Activated naive CD4-positive, alpha-beta T cell treated with anti-CD3 and anti-CD28 coated beads for 36 hours (primary cell): ENCODE measurements at regions of chr22 and their contacts with region 1.

Region 1: DNA sequence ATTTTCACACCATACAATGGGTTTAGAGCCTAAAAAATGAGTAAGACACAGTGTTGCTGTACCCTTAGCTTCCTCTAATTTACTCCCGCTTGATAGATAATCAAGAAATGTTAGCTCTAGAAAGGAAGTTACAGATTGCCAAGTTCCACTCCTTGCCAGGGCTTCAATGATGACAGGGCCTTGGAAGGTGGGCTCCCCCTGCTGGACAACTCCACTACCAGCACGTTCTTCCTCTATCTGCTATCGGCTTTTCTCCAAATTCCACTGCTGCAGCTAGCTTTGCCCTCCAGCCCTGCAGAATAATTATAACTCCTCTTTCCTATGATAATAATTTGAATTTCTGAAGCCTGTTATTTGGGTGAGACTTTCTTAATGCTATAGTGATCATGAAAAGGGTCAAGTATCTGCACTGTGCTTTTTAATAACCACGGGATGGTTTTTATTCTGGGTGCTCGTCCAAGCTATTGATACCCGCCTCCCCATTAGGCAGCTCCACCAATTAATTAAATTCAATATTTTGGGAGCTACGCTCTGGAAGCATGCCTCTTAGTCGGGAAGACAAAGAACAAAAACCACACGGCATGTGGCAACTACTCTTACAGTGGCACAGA is 9.0 kb downstream of the SYN3 start:
- DNase-seq: peak; percentile 74
- H3K4me3 Mint-ChIP-seq: no peak overlapping the region
- H3K27ac Mint-ChIP-seq: no peak overlapping the region
- H3K4me1 Mint-ChIP-seq: no peaks in the 10 kb centered on the region
- H3K27me3 Mint-ChIP-seq: peaks cover 28% of the 10 kb centered on the region

Region 2: DNA sequence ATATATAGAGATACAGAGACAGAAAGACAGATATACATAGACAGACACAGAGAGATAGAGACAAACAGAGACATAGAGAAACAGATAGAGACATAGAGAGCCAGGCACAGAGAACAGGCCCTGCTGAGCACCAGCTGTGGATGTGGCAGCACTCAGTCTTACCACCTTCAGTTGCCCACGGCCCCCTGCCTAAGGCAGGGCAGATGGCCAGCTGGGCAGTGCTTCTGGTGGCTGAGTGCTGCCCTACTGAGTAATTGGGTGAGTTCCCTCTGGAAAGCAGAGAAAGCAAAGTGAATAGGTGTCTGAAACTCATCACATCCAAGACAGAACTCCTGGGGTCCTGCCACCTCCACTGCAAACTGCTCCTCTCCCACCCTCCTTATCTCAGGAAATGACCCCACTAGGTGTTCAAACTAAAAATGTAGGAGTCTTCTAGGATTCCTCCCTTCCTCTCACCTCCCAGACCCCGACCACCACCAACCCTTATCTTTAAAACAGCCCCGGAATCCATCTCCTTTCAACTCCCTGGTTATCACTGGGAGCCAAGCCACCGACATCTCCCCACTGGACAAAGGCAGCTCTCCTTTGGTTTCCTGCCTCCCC is 18.2 kb before region 1 on chr22:
- CTCF ChIA-PET with region 1: interaction called, 11 read pairs
- intact Hi-C with region 1: no loop called
- DNase-seq: no peak
- H3K4me3 Mint-ChIP-seq: no peak overlapping the region
- H3K27ac Mint-ChIP-seq: no peak overlapping the region
- H3K4me1 Mint-ChIP-seq: no peaks in the 10 kb centered on the region
- H3K27me3 Mint-ChIP-seq: peaks cover 4% of the 10 kb centered on the region

Region 3: DNA sequence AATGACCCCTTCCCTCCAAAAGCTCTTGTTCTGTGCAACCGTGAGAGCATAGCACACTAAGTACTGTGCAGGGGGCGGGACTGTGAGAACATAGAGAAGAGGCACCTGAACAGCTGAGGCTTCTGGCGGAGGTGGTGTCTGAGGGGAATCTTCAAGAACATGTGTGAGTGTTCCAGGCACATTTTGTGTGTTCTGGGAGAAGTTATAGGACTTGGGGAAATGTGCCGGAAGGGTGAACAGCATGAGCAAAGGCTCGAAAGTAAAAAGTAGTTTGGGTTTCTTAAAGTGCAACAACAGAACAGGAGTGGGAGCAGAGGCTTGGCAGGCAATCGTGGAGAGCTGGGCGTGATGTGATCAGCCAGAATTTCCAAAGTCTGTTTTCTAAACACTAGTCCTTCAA is 21.4 kb after region 1 on chr22:
- CTCF ChIA-PET with region 1: no interaction called
- intact Hi-C with region 1: no loop called
- DNase-seq: no peak
- H3K4me3 Mint-ChIP-seq: no peak overlapping the region
- H3K27ac Mint-ChIP-seq: no peak overlapping the region
- H3K4me1 Mint-ChIP-seq: no peaks in the 10 kb centered on the region
- H3K27me3 Mint-ChIP-seq: peaks cover 17% of the 10 kb centered on the region